Activated CD4-positive, alpha-beta memory T cell treated with anti-CD3 and anti-CD28 coated beads for 36 hours (primary cell): ENCODE measurements at regions of chr11 and their contacts with region 1.

Region 1: GRCh38 chr11:82900277-82901164 is at the start of gene PRCP:
- DNase-seq: peak; percentile 97
- H3K4me3 Mint-ChIP-seq: peak within 1 kb of the TSS; percentile 98
- H3K27ac Mint-ChIP-seq: peak within 1 kb of the TSS; percentile 95
- H3K4me1 Mint-ChIP-seq: peaks cover 40% of the 10 kb centered on the region
- H3K27me3 Mint-ChIP-seq: no peaks in the 10 kb centered on the region
- total RNA-seq, gene PRCP: 26.7 to 27.0 TPM

Region 2: DNA sequence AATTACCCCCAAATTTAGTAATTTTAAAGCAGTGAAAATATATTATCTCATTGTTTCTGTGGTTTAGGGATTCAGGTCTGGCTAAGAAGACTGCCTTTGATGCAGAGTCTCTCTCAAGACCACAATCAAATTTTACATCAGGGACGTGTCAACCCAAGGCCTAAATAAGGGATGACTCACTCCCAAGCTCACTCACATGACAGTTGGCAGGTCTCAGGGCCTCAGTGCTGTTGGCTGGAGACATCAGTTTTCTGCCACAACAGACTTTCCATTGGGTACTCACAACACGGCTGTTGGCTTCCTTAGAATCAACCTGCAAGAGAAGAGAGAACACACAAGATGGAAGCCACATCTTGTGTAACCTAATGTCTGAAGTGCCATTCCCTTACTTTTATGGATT is 544.2 kb before region 1 on chr11:
- CTCF ChIA-PET with region 1: no interaction called
- POLR2A ChIA-PET with region 1: no interaction called
- intact Hi-C with region 1: no loop called
- DNase-seq: no peak
- H3K4me3 Mint-ChIP-seq: no peak overlapping the region
- H3K27ac Mint-ChIP-seq: no peak overlapping the region
- H3K4me1 Mint-ChIP-seq: no peaks in the 10 kb centered on the region
- H3K27me3 Mint-ChIP-seq: no peaks in the 10 kb centered on the region

Region 3: GRCh38 chr11:82873919-82874333 is 26.6 kb before region 1 on chr11:
- CTCF ChIA-PET with region 1: interaction called, 15 read pairs
- POLR2A ChIA-PET with region 1: interaction called, 6 read pairs
- intact Hi-C with region 1: loop called (anchors 1 kb)
- DNase-seq: no peak
- H3K4me3 Mint-ChIP-seq: no peak overlapping the region
- H3K27ac Mint-ChIP-seq: peak overlapping the region; percentile 68
- H3K4me1 Mint-ChIP-seq: peaks cover 29% of the 10 kb centered on the region
- H3K27me3 Mint-ChIP-seq: no peaks in the 10 kb centered on the region

Region 4: DNA sequence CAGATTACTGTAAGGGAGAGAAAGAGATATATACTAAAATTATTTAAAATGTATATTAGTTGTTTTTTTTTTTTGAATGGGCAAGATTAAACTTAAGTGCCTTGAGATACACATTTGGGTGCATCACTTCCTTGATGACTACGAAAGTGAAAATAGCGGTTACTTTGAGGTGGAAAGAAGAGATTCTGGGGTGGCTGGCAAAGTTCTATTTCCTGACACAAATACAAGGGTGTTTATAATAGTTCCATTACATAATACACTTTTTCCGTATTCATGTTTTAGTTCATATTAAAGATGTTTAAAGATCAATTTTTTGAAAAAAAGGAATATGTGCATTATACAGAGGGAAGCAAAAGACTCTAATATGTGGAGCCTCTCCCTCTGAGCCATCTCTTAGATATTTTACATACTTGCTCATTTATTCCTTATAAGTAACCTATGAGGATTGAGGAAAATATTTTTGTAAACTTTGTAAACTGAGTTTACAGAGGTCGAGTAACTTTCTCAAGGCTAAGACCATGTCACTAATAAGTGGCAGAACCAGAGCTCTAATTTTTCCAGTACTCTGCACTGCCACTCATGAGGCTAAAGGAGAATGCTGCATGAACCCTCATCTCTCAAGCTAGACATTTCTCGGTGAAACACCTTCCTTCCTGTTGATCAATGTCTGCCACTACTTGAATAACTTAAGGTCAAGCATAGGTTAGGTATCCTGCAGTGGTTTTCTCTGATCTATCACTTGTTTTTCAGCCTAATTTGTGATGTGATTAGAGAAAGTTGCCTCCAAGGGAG is 59.7 kb after region 1 on chr11:
- CTCF ChIA-PET with region 1: no interaction called
- POLR2A ChIA-PET with region 1: interaction called, 3 read pairs
- intact Hi-C with region 1: loop called (anchors 1 kb)
- DNase-seq: peak; percentile 33
- H3K4me3 Mint-ChIP-seq: peak overlapping the region; percentile 4
- H3K27ac Mint-ChIP-seq: peak overlapping the region; percentile 67
- H3K4me1 Mint-ChIP-seq: peaks cover 65% of the 10 kb centered on the region
- H3K27me3 Mint-ChIP-seq: no peaks in the 10 kb centered on the region

Region 5: GRCh38 chr11:82996966-82997606 is 96.6 kb after region 1 on chr11:
- CTCF ChIA-PET with region 1: no interaction called
- POLR2A ChIA-PET with region 1: interaction called, 5 read pairs
- intact Hi-C with region 1: loop called (anchors 5 kb)
- DNase-seq: peak; percentile 67
- H3K4me3 Mint-ChIP-seq: no peak overlapping the region
- H3K27ac Mint-ChIP-seq: peak overlapping the region; percentile 43
- H3K4me1 Mint-ChIP-seq: peaks cover 60% of the 10 kb centered on the region
- H3K27me3 Mint-ChIP-seq: no peaks in the 10 kb centered on the region

Region 6: GRCh38 chr11:83033972-83034672 is 133.6 kb after region 1 on chr11:
- CTCF ChIA-PET with region 1: no interaction called
- POLR2A ChIA-PET with region 1: no interaction called
- intact Hi-C with region 1: no loop called
- DNase-seq: no peak
- H3K4me3 Mint-ChIP-seq: no peak overlapping the region
- H3K27ac Mint-ChIP-seq: no peak overlapping the region
- H3K4me1 Mint-ChIP-seq: peaks cover 26% of the 10 kb centered on the region
- H3K27me3 Mint-ChIP-seq: no peaks in the 10 kb centered on the region

Region 7: DNA sequence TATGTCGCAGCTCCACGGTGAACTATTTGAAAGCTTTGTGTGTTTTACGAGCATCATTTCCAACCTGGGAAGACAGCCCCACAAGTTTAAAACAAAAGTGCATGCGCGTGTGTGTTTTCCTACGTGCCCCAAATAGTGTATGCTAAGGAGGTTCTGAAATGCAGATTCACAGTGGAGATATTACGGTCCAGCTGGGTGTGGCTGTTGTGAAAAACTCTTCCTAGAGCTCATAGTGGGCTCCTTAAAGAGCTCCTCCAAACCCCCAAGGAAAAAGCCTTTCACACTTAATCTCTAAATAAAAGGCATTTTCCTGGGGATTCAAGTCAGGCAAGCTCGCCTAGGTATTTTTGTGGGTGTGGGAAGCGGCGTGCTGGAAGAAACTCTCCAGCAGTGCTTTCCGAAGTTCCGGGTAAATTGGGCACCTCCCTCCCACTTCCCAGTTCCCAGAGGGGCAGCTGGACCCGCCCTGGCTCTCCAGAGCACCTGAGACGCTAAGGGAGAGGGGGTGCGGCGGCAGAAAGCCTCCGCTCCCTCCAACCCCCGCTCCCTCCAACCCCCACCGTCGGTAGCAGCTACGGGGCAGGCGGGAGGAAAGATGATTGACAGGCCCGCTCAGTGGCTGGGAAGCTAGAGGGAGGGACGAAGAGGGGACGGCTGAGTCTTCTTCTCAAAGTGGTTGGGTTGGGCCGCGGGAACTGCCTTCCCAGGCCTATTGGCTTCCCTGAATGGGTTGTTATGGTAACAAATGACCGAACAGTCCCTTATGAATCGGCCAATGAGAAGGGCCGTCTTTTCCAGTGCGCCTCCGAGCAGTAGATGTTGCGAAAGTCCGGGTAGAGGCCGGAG is 255.9 kb after region 1 on chr11:
- CTCF ChIA-PET with region 1: interaction called, 7 read pairs
- POLR2A ChIA-PET with region 1: interaction called, 67 read pairs
- intact Hi-C with region 1: loop called (anchors 1 kb)
- DNase-seq: peak; percentile 99
- H3K4me3 Mint-ChIP-seq: peak overlapping the region; percentile 100
- H3K27ac Mint-ChIP-seq: peak overlapping the region; percentile 100
- H3K4me1 Mint-ChIP-seq: peaks cover 20% of the 10 kb centered on the region
- H3K27me3 Mint-ChIP-seq: no peaks in the 10 kb centered on the region

Region 8: DNA sequence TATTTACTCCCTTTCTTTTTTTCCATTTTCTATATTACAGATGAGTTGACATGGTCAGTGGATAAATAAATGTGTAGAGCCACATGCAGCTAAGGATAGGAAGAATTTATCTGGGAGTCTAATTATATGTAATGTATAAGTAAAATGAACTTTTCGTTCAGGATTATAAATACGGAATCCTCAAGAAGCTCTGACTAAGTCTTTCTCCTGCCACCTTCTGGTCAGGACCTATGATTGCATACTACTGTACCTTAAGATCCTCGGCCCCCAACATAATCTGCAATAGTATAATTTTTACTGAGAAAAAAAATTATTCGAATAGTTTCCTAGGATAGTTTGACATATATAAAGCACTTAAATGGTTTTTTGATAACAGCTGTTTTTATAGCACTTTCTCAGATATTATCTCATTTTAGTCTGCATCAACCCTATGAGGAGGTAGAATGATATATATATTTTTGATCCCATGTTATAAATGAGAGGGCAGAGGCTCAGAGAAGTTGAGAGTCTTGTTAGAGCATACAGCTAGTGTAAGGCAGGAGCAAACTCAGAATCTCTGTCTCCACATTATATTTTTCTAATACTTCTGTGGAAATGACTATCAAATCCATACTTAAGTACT is 349.6 kb after region 1 on chr11:
- CTCF ChIA-PET with region 1: interaction called, 15 read pairs
- POLR2A ChIA-PET with region 1: no interaction called
- intact Hi-C with region 1: no loop called
- DNase-seq: no peak
- H3K4me3 Mint-ChIP-seq: no peak overlapping the region
- H3K27ac Mint-ChIP-seq: no peak overlapping the region
- H3K4me1 Mint-ChIP-seq: no peaks in the 10 kb centered on the region
- H3K27me3 Mint-ChIP-seq: no peaks in the 10 kb centered on the region

Region 9: DNA sequence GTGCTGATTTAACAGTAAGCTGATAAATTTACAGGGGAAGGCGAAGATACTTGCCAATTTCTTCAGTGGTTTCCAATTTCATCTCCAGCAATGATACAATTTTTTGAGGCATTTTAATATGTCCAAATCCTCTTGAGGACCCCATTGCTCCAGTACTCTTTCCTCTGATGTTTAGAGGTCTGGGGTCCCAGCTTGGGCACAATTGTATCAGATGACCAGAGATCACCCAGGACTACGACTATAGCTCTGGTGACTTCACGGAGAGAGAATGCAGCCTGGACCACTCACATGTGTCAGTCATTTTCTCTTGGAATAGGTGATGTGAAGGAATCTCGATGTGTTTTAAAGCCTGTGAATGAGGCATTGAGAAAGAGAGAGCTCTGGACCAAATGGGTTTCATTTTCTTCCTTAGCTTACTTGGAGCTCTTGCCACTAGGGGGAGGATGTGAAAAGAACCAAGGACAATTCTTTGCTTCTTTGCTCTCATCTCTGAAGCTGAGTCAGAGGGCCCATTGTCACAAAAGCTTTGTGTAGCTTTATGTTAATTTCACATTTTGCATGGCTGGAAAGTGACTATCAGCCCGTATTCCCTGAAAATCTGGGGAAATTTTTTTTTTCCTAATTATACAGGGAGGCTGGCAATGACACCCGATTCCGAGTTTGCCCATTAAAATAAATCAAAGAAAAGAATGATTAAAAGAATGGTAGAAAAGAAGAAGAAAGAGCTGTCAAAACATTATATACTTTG is 392.4 kb after region 1 on chr11:
- CTCF ChIA-PET with region 1: interaction called, 12 read pairs
- POLR2A ChIA-PET with region 1: no interaction called
- intact Hi-C with region 1: no loop called
- DNase-seq: no peak
- H3K4me3 Mint-ChIP-seq: peak overlapping the region; percentile 44
- H3K27ac Mint-ChIP-seq: no peak overlapping the region
- H3K4me1 Mint-ChIP-seq: peaks cover 10% of the 10 kb centered on the region
- H3K27me3 Mint-ChIP-seq: no peaks in the 10 kb centered on the region